Left colon (tissue), 2 donors: ENCODE measurements at regions of chr15 and their contacts with region 1.

Region 1: GRCh38 chr15:64731012-64731806 is 44.2 kb downstream of the RBPMS2 start:
- DNase-seq: peak; percentile 74 to 94
- ATAC-seq: peak; percentile 92

Region 2: DNA sequence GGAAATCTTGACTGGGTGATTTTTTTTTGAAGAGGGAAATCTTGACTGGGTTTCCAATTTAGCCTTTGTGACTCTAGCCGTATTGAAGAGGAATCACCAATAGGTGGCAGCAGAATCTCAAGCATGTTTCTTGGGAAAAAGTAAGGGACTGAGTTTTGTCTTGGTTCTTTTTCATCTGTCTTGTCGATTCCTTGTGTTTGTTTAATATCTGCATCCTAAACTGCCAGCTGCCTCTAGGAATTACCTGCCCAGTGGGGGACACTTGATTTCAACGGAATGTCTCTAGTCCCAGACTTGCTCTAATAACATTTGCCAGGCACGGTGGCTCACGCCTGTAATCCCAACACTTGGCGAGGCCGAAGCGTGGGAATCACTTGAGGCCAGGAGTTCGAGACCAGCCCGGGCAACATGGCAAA is 45.0 kb before region 1 on chr15:
- intact Hi-C with region 1: loop called (anchors 2 to 5 kb)
- DNase-seq: no peak
- ATAC-seq: peak; percentile 29

Region 3: GRCh38 chr15:64809649-64810496 is 78.7 kb after region 1 on chr15:
- intact Hi-C with region 1: loop called (anchors 5 to 10 kb)
- DNase-seq: peak; percentile 71 to 87
- ATAC-seq: peak; percentile 76

Region 4: DNA sequence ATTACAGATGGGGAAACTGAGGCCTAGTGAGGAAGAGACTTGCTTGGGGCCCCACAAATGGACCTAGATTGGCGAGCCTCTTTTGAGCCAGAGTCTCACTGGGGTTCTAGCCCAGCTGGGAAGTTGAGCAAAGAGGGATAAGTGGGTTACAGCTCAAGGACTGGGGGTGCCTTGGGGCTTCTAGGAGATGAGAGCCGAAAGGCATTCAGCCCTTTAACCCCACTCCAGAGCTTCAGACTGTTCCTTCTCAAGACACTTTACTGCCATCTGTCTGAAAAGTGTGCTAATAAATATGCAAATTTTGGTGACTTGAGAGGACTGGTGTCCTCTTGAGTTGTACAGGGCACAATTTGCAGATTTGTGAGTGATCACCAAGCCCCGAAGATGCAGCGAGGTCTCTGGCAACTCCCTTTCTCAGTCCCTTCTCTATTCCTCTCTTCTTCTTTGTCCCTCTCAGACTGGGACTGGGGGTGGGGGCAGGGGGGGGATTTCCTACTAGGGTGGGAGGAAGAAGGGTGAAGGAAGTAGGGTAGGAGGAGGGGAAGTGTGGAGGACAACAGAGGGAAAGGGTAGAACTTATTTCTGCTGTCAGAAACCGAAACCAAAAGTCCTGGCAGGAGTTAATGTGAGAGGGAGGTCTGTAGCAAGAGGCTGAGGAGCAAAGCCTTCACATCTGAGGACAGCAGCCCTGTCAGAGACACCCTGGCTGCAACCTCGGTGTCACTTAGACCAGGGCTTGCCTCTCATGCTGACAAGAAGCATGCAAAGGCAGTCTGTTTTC is 164.3 kb after region 1 on chr15:
- intact Hi-C with region 1: loop called (anchors 5 to 10 kb)
- DNase-seq: no peak
- ATAC-seq: peak; percentile 35

Region 5: GRCh38 chr15:64905119-64905831 is 174.1 kb after region 1 on chr15:
- intact Hi-C with region 1: loop called in 1 of 2 experiments (anchors 10 kb)
- DNase-seq: peak; percentile 61 to 83
- ATAC-seq: peak; percentile 81